Sciatic nerve (tissue), 2 donors: ENCODE measurements at regions of chr1 and their contacts with region 1.

Region 1: GRCh38 chr1:242025681-242026080 is 26.8 kb upstream of the MAP1LC3C start:
- DNase-seq: no peak
- ATAC-seq: no peak

Region 2: GRCh38 chr1:241532864-241533263 is 492.8 kb before region 1 on chr1:
- intact Hi-C with region 1: loop called (anchors 2 kb)
- DNase-seq: no peak
- ATAC-seq: no peak

Region 3: DNA sequence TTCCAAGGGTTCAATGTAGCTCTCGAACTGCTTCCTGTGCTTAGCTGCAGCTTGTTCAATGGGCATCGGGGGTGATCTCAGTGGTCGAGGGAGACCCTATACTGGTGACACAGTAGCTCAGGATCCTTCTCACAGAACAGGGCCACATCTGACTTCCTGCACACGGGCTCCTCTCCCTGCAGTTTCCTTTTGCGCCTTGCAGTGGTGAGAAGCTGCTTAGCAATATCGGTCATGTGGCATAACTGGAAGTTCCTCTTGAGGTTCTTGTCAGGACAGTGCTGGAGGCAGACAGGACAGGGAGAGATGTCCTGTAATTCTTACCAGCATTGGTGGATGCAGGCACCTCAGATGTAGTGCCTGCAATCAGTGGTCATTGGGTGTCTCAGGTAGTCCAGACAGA is 113.8 kb after region 1 on chr1:
- intact Hi-C with region 1: no loop called
- DNase-seq: no peak
- ATAC-seq: no peak